Activated naive CD4-positive, alpha-beta T cell treated with anti-CD3 and anti-CD28 coated beads for 36 hours (primary cell): ENCODE measurements at regions of chr2 and their contacts with region 1.

Region 1: DNA sequence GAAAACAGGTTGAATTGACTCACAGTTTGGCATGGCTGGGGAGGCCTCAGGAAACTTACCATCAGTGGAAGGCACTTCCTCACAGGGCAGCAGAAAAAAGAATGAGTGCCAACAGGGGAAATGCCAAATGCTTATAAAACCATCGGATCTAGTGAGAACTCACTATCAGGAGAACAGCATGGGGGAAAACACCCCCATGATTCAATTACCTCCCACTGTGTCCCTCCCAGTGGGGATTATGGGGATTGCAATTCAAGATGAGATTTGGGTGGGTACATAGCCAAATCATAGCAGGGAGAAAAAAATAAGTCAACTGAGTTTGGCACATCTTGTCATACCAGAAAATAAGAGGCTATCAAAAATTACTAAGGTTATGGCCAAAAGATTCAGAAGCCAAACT is 96.3 kb downstream of the TRIP12 start:
- DNase-seq: no peak
- H3K4me3 Mint-ChIP-seq: no peak overlapping the region
- H3K27ac Mint-ChIP-seq: no peak overlapping the region
- H3K4me1 Mint-ChIP-seq: peaks cover 21% of the 10 kb centered on the region
- H3K27me3 Mint-ChIP-seq: no peaks in the 10 kb centered on the region

Region 2: DNA sequence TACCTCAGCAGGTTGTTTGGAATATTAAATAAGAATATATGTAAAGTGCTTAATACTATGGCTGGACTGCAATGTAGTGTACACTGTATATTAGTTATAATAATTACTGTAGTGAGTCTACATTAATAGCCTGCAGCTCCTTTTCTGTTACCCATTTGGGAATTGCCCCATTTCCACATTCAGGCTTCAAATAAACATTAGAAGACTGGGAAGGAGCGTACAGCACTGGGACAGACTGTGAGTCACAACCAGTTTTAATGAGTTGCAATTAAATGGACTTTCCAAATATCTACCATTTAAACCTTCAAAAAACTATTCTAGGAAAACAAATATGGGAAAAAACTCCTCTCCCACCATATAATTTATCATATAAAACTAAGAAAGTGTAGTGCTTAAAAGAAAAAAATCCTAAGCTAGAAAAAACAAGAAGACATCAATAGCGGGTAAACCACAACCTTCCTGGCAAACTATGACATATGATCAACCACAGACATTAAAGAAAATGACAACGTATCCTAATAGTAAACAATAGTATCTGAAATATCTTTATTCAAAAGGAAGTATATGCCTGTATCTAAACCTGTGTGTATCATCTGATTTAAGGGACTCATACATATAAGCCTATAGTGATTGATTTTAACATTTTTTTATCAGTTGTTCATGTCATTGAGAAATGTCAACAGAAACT is 10.3 kb after region 1 on chr2:
- CTCF ChIA-PET with region 1: no interaction called
- intact Hi-C with region 1: loop called (anchors 1 kb)
- DNase-seq: no peak
- H3K4me3 Mint-ChIP-seq: no peak overlapping the region
- H3K27ac Mint-ChIP-seq: no peak overlapping the region
- H3K4me1 Mint-ChIP-seq: peaks cover 52% of the 10 kb centered on the region
- H3K27me3 Mint-ChIP-seq: no peaks in the 10 kb centered on the region

Region 3: DNA sequence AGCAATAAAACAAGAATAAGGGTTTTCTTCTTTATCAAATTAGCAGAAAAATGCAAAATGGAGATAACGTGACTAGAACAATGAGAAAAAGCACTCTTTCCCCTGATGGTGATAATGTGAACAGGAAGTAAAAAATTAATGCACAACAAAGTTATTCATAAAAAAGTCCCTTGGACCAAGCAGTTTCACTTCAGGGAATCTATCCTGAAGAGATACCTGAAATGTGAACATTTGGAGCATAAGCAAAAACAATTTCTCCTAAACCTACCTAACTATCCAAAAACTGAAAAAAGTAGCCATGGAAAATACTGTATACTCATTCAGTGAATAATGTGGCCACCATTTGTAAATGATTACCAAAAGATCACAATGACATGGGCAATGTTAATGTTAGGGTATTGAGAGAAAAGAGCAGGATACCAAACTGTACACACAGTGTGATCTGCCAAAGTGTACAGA is 47.7 kb after region 1 on chr2:
- CTCF ChIA-PET with region 1: no interaction called
- intact Hi-C with region 1: loop called (anchors 5 kb)
- DNase-seq: no peak
- H3K4me3 Mint-ChIP-seq: no peak overlapping the region
- H3K27ac Mint-ChIP-seq: peak overlapping the region; percentile 21
- H3K4me1 Mint-ChIP-seq: peaks cover 49% of the 10 kb centered on the region
- H3K27me3 Mint-ChIP-seq: no peaks in the 10 kb centered on the region

Region 4: GRCh38 chr2:229921892-229922445 is 96.5 kb after region 1 on chr2 and contains the start of gene TRIP12:
- CTCF ChIA-PET with region 1: no interaction called
- intact Hi-C with region 1: loop called (anchors 1 kb)
- DNase-seq: peak; percentile 91
- H3K4me3 Mint-ChIP-seq: peak within 1 kb of the TSS; percentile 90
- H3K27ac Mint-ChIP-seq: peak within 1 kb of the TSS; percentile 99
- H3K4me1 Mint-ChIP-seq: peaks cover 34% of the 10 kb centered on the region
- H3K27me3 Mint-ChIP-seq: no peaks in the 10 kb centered on the region
- total RNA-seq, gene TRIP12: 188 to 190 TPM

Region 5: GRCh38 chr2:230219419-230220331 is 394.2 kb after region 1 on chr2 and contains the start of gene SP110:
- CTCF ChIA-PET with region 1: no interaction called
- intact Hi-C with region 1: loop called (anchors 5 kb)
- DNase-seq: peak; percentile 91
- H3K4me3 Mint-ChIP-seq: peak within 1 kb of the TSS; percentile 99
- H3K27ac Mint-ChIP-seq: peak within 1 kb of the TSS; percentile 99
- H3K4me1 Mint-ChIP-seq: peaks cover 62% of the 10 kb centered on the region
- H3K27me3 Mint-ChIP-seq: no peaks in the 10 kb centered on the region
- total RNA-seq, gene SP110: 85.3 to 88.8 TPM